Heart left ventricle (tissue), 16 donors: ENCODE measurements at regions of chr10 and their contacts with region 1.

Region 1: GRCh38 chr10:71696628-71697326 is 22.8 kb downstream of the C10orf105 start:
- DNase-seq: peak; percentile 53 to 83 (median 59)
- ATAC-seq: peak; percentile 54 to 73 (median 62)
- H3K4me3 ChIP-seq: no peak overlapping the region
- H3K27ac ChIP-seq: no peak overlapping the region
- H3K4me1 ChIP-seq: peaks cover 0 to 67% (median 36%) of the 10 kb centered on the region in 12 donors
- H3K27me3 ChIP-seq: no peaks in the 10 kb centered on the region
- CTCF ChIP-seq: peak; percentile 73 to 93 (median 82)
- POLR2A ChIP-seq: no peak

Region 2: GRCh38 chr10:70664702-70665195 is 1032.0 kb before region 1 on chr10:
- intact Hi-C with region 1: no loop called
- DNase-seq: peak in 3 of 5 donors; percentile 41 to 70 (median 54)
- ATAC-seq: peak; percentile 20 to 82 (median 50)
- H3K4me3 ChIP-seq: no peak overlapping the region
- H3K27ac ChIP-seq: no peak overlapping the region
- H3K4me1 ChIP-seq: peaks cover 0 to 10% (median 2%) of the 10 kb centered on the region in 12 donors
- H3K27me3 ChIP-seq: no peaks in the 10 kb centered on the region
- CTCF ChIP-seq: no peak
- POLR2A ChIP-seq: no peak

Region 3: GRCh38 chr10:71314028-71314693 is 382.6 kb before region 1 on chr10:
- intact Hi-C with region 1: loop called in 3 of 10 experiments (anchors 5 to 10 kb)
- DNase-seq: peak in 4 of 5 donors; percentile 44 to 66 (median 50)
- ATAC-seq: peak; percentile 54 to 68 (median 66)
- H3K4me3 ChIP-seq: peak overlapping the region in 4 of 12 donors; percentile 14 to 36 (median 26)
- H3K27ac ChIP-seq: peak overlapping the region in 3 of 12 donors; percentile 21 to 57 (median 30)
- H3K4me1 ChIP-seq: peaks cover 0 to 34% (median 18%) of the 10 kb centered on the region in 12 donors
- H3K27me3 ChIP-seq: no peaks in the 10 kb centered on the region
- CTCF ChIP-seq: peak; percentile 74 to 96 (median 86)
- POLR2A ChIP-seq: no peak

Region 4: DNA sequence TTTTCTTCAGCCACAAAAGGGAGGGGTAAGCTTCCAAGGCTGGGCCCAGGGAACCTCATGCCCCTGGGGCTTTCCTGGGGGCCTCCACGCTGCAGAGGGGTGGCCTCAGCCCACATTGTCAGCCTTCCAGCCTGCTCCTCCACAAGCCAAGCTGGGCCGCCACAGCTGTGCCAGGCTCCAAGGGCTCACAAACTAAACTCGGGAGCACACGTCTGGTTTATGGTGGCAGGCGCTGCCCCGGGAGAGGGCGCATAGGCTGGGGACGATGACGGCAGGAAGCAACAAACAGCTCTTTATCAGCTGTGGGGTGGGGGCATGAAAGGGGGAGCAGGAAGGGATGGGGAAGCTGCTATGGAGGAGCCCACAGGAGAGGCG is 306.3 kb before region 1 on chr10:
- intact Hi-C with region 1: loop called in 3 of 10 experiments (anchors 5 to 10 kb)
- DNase-seq: no peak
- ATAC-seq: peak in 1 of 4 donors; percentile 24
- H3K4me3 ChIP-seq: no peak overlapping the region
- H3K27ac ChIP-seq: no peak overlapping the region
- H3K4me1 ChIP-seq: no peaks in the 10 kb centered on the region
- H3K27me3 ChIP-seq: peaks cover 0 to 16% (median 0%) of the 10 kb centered on the region in 9 donors
- CTCF ChIP-seq: no peak
- POLR2A ChIP-seq: no peak

Region 5: GRCh38 chr10:71608819-71609768 is 87.7 kb before region 1 on chr10:
- intact Hi-C with region 1: loop called in 2 of 10 experiments (anchors 5 to 10 kb)
- DNase-seq: peak; percentile 72 to 87 (median 81)
- ATAC-seq: peak in 3 of 4 donors; percentile 22 to 68 (median 58)
- H3K4me3 ChIP-seq: no peak overlapping the region
- H3K27ac ChIP-seq: no peak overlapping the region
- H3K4me1 ChIP-seq: peaks cover 3 to 22% (median 17%) of the 10 kb centered on the region in 12 donors
- H3K27me3 ChIP-seq: no peaks in the 10 kb centered on the region
- CTCF ChIP-seq: peak; percentile 60 to 86 (median 82)
- POLR2A ChIP-seq: no peak

Region 6: DNA sequence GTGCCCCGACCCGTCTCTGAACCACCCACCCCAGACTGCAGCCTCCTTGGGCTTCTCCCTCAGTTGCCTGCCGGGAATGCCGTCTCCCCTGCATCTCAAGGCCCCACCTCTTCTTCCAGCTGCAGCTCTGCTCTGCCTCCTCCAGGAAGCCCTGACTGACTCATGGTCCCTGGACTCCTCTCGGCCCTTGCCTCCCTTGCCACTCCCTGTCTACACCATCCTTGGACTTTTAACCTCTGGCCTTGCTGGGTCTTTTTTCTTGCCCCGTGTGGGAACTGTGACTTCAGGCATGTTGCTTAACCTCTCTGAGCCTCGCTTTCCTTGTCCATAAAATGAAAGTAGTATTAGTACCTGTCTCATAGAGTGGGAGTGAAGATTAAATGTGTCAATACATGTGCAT is 33.5 kb before region 1 on chr10:
- intact Hi-C with region 1: loop called in 1 of 10 experiments (anchors 5 kb)
- DNase-seq: no peak
- ATAC-seq: no peak
- H3K4me3 ChIP-seq: no peak overlapping the region
- H3K27ac ChIP-seq: no peak overlapping the region
- H3K4me1 ChIP-seq: no peaks in the 10 kb centered on the region
- H3K27me3 ChIP-seq: no peaks in the 10 kb centered on the region
- CTCF ChIP-seq: no peak
- POLR2A ChIP-seq: no peak

Region 7: DNA sequence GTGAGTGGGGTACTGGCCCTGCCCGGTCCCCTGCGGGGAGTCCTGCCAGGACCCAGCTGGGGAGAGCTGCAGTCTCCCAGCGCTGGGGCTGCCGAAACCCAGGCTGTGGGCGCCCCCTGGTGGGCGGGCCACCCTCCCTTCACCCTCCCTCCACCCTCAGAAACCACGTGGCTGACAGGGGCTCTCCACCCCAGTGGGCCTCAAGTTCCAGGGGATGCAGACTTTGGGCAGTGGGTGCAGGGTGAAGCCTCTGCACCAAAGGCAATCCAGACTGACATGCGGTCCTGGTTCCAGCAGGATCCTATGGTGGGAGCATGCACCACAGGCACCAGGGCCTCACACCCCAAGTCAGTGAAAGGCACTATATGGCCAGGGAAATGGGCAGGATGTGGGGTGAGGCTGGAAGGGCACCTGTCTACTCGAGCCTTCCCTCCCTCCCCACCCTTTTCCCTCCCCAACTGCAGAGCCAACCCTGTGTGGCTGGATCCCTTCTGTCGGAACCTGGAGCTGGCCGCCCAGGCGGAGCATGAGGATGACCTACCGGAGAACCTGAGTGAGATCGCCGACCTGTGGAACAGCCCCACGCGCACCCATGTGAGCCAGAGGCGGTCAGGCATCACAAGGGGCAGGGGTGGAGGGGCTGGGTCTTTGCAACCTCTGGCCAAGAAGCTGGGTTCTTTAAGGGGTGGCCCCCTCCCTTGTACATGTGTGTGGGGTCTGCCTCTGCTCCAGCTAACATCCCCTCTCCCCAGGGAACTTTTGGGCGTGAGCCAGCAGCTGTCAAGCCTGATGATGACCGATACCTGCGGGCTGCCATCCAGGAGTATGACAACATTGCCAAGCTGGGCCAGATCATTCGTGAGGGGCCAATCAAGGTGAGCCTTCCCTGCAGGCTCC is 115.5 kb after region 1 on chr10:
- intact Hi-C with region 1: loop called in 1 of 10 experiments (anchors 5 kb)
- DNase-seq: peak; percentile 57 to 87 (median 68)
- ATAC-seq: peak; percentile 66 to 87 (median 84)
- H3K4me3 ChIP-seq: no peak overlapping the region
- H3K27ac ChIP-seq: no peak overlapping the region
- H3K4me1 ChIP-seq: peaks cover 0 to 30% (median 10%) of the 10 kb centered on the region in 12 donors
- H3K27me3 ChIP-seq: peaks cover 0 to 9% (median 0%) of the 10 kb centered on the region in 9 donors
- CTCF ChIP-seq: peak; percentile 54 to 89 (median 84)
- POLR2A ChIP-seq: no peak